HEK293T (cell line): ENCODE measurements at regions of chrX and their contacts with region 1.

Region 1: GRCh38 chrX:153667956-153668396 is 5.6 kb downstream of the PNCK start:
- DNase-seq: peak; percentile 83

Region 2: GRCh38 chrX:153599192-153600031 is 68.6 kb before region 1 on chrX:
- CTCF ChIA-PET with region 1: interaction called, 10 read pairs
- POLR2A ChIA-PET with region 1: no interaction called
- DNase-seq: peak; percentile 98

Region 3: GRCh38 chrX:153635788-153636622 is 32.0 kb before region 1 on chrX:
- CTCF ChIA-PET with region 1: interaction called, 14 read pairs
- POLR2A ChIA-PET with region 1: no interaction called
- DNase-seq: peak; percentile 74

Region 4: GRCh38 chrX:153657161-153657560 is 10.8 kb before region 1 on chrX:
- CTCF ChIA-PET with region 1: interaction called, 10 read pairs
- POLR2A ChIA-PET with region 1: no interaction called
- DNase-seq: no peak

Region 5: DNA sequence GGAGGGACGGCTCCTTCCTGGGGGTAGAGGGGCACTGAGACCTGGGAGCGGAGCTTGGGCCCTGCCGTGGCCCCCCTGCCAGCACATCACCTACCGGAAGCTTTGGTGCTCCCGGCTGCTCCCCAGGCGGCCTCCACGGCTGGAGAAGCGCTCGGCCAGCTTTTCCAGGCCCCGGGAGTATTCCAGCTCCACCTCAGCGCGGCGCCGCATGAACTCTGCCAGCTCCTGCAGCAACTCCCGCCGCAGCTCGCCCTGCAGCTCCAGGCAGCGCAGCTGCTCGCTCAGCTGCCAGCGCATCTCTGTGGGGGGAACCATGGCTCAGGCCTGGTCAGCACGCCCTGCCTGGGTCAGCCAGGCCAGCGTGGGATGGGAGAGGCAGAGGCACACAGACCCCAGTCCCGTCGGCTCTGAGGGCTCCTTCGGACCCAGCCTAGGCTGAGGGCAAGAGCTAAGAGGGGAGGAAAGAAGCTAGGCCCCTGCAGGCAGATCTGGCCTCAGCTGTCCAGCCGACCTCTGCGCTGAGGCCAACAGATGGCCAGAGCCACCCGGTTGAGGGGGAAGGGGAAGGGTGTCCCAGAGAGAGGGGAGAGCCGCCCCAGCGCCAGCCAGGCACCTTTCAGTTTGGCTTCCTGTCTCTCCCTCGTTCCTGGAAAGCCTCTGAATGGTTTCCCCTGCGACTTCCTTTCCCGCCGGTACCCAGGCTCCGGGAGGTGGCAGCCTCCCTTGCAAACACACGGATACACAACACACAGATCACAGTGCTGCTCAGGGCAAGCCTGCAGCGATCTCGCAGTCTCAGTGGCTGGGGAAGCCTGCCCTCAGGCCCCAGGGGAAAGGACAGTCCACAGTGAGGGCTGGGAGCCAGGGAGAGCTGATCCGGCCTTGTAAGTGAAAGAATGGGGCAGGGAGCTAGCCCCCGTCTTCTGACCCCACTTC is 253.8 kb after region 1 on chrX:
- CTCF ChIA-PET with region 1: no interaction called
- POLR2A ChIA-PET with region 1: no interaction called
- DNase-seq: no peak